Calu3 (cell line): ENCODE measurements at regions of chr6 and their contacts with region 1.

Region 1: DNA sequence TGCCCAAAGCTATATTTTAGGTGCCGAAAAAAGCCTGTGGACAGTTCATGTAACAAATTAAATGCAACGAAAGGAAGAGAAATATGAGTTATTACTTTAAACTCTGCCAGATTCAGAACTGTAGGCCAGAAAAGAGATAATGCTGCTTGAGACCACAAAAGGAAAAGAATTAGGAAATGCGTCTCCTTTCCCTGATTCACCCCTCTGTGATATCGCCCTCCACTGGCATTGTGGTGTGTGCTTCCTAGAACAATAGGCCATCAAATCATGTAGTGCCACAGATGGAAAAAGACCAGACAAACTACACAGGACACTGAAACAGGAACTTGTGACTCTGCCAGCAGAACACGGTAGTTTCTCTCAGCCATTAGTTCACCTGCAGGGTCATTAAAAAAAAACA is 14.7 kb upstream of the LAMA4 start:
- DNase-seq: no peak
- H3K4me3 Mint-ChIP-seq: no peak overlapping the region
- H3K27ac Mint-ChIP-seq: no peak overlapping the region
- H3K4me1 Mint-ChIP-seq: no peaks in the 10 kb centered on the region
- H3K27me3 Mint-ChIP-seq: no peaks in the 10 kb centered on the region
- CTCF ChIP-seq: no peak

Region 2: DNA sequence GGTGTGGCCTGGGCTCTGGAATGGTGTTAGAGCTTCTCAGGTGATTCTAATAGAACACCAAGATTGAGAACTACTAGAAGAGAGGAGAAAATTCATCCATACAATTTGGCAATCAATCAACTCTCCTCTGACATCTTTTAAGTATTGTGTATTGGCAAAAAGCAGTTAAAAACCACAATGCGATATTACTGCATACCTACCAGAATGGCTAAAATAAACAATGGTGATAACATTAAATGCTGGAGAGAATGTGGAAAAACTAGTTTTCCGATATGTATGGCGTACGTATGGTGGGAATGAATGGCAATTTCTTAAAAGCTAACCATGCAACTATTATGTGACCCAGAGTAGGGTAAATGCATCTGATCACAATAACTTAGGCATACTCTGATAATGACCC is 14.5 kb after region 1 on chr6:
- CTCF ChIA-PET with region 1: interaction called, 11 read pairs
- intact Hi-C with region 1: no loop called
- DNase-seq: no peak
- H3K4me3 Mint-ChIP-seq: no peak overlapping the region
- H3K27ac Mint-ChIP-seq: no peak overlapping the region
- H3K4me1 Mint-ChIP-seq: peaks cover 26% of the 10 kb centered on the region
- H3K27me3 Mint-ChIP-seq: no peaks in the 10 kb centered on the region
- CTCF ChIP-seq: no peak